ENCODE measurements at regions of chr13 and their contacts with region 1.

Region 1: GRCh38 chr13:49300739-49301589 is 53.2 kb downstream of the CDADC1 start:
- DNase-seq: peak; percentile 75
- H3K4me3 ChIP-seq: no peak overlapping the region
- H3K4me3 Mint-ChIP-seq: peak overlapping the region; percentile 57
- H3K27ac Mint-ChIP-seq: peak overlapping the region; percentile 69
- H3K4me1 ChIP-seq: peaks cover 28% of the 10 kb centered on the region
- H3K4me1 Mint-ChIP-seq: peaks cover 33% of the 10 kb centered on the region
- H3K27me3 ChIP-seq: no peaks in the 10 kb centered on the region
- H3K27me3 Mint-ChIP-seq: no peaks in the 10 kb centered on the region
- CTCF ChIP-seq: peak; percentile 86 to 91

Region 2: GRCh38 chr13:48356750-48357149 is 944.2 kb before region 1 on chr13:
- CTCF ChIA-PET with region 1: no interaction called
- POLR2A ChIA-PET with region 1: no interaction called
- intact Hi-C with region 1: no loop called
- DNase-seq: no peak
- H3K4me3 ChIP-seq: no peak overlapping the region
- H3K4me3 Mint-ChIP-seq: no peak overlapping the region
- H3K27ac Mint-ChIP-seq: no peak overlapping the region
- H3K4me1 ChIP-seq: no peaks in the 10 kb centered on the region
- H3K4me1 Mint-ChIP-seq: peaks cover 6% of the 10 kb centered on the region
- H3K27me3 ChIP-seq: no peaks in the 10 kb centered on the region
- H3K27me3 Mint-ChIP-seq: no peaks in the 10 kb centered on the region
- CTCF ChIP-seq: no peak

Region 3: DNA sequence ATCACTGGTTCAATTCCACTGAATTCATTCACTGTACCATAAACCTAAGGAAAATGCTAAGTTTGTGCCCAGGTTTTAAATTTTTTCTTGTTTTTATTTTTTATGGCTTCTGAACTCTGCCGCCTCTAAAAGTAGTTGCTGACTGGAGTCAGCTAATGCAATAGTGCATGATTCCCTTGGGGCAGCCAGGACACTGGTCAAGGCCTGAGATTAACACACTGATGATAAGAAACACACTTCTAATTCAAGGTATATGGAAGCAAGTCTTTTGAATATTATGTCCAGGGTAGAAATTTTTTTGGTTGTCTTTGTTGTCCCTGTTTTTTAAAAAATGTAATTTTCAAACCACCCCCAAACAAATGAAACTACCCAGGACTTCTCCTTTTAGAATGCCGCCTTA is 19.0 kb after region 1 on chr13:
- CTCF ChIA-PET with region 1: no interaction called
- POLR2A ChIA-PET with region 1: no interaction called
- intact Hi-C with region 1: no loop called
- DNase-seq: no peak
- H3K4me3 ChIP-seq: no peak overlapping the region
- H3K4me3 Mint-ChIP-seq: no peak overlapping the region
- H3K27ac Mint-ChIP-seq: no peak overlapping the region
- H3K4me1 ChIP-seq: peaks cover 6% of the 10 kb centered on the region
- H3K4me1 Mint-ChIP-seq: peaks cover 16% of the 10 kb centered on the region
- H3K27me3 ChIP-seq: no peaks in the 10 kb centered on the region
- H3K27me3 Mint-ChIP-seq: no peaks in the 10 kb centered on the region
- CTCF ChIP-seq: no peak

Region 4: GRCh38 chr13:49371943-49372613 is 71.1 kb after region 1 on chr13:
- CTCF ChIA-PET with region 1: interaction called, 4 read pairs
- POLR2A ChIA-PET with region 1: no interaction called
- intact Hi-C with region 1: loop called (anchors 2 kb)
- DNase-seq: peak; percentile 68 to 74
- H3K4me3 ChIP-seq: no peak overlapping the region
- H3K4me3 Mint-ChIP-seq: peak overlapping the region; percentile 1
- H3K27ac Mint-ChIP-seq: peak overlapping the region; percentile 71
- H3K4me1 ChIP-seq: peaks cover 83% of the 10 kb centered on the region
- H3K4me1 Mint-ChIP-seq: peaks cover 47% of the 10 kb centered on the region
- H3K27me3 ChIP-seq: no peaks in the 10 kb centered on the region
- H3K27me3 Mint-ChIP-seq: no peaks in the 10 kb centered on the region
- CTCF ChIP-seq: no peak

Region 5: GRCh38 chr13:49400755-49401659 is 100.0 kb after region 1 on chr13:
- CTCF ChIA-PET with region 1: no interaction called
- POLR2A ChIA-PET with region 1: no interaction called
- intact Hi-C with region 1: loop called (anchors 1 kb)
- DNase-seq: peak; percentile 67 to 74
- H3K4me3 ChIP-seq: peak overlapping the region; percentile 33
- H3K4me3 Mint-ChIP-seq: peak overlapping the region; percentile 72
- H3K27ac Mint-ChIP-seq: peak overlapping the region; percentile 58
- H3K4me1 ChIP-seq: peaks cover 30% of the 10 kb centered on the region
- H3K4me1 Mint-ChIP-seq: peaks cover 6% of the 10 kb centered on the region
- H3K27me3 ChIP-seq: no peaks in the 10 kb centered on the region
- H3K27me3 Mint-ChIP-seq: no peaks in the 10 kb centered on the region
- CTCF ChIP-seq: no peak

Region 6: DNA sequence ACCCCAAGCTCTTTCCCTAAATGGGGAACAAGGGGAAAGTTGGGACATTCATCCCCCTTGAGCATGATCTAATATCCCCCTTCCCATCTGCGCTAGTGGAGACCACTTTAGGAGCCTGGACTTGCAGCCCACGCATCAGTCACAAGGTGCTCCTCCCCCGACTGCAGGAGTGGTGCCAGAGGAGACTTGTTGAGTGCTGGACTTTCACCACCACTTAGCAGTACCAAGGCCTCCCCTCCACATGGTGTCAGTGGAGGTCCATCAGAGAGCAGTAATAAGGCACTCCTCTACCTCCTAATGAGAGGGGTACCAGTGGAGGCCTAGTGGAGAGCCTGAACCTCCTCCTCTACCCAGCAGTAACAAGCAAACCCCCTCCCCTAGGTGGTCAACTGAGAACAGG is 120.4 kb after region 1 on chr13:
- CTCF ChIA-PET with region 1: no interaction called
- POLR2A ChIA-PET with region 1: no interaction called
- intact Hi-C with region 1: loop called (anchors 5 kb)
- DNase-seq: peak; percentile 58 to 62
- H3K4me3 ChIP-seq: no peak overlapping the region
- H3K4me3 Mint-ChIP-seq: no peak overlapping the region
- H3K27ac Mint-ChIP-seq: no peak overlapping the region
- H3K4me1 ChIP-seq: no peaks in the 10 kb centered on the region
- H3K4me1 Mint-ChIP-seq: peaks cover 4% of the 10 kb centered on the region
- H3K27me3 ChIP-seq: no peaks in the 10 kb centered on the region
- H3K27me3 Mint-ChIP-seq: no peaks in the 10 kb centered on the region
- CTCF ChIP-seq: peak; percentile 20 to 26

Region 7: DNA sequence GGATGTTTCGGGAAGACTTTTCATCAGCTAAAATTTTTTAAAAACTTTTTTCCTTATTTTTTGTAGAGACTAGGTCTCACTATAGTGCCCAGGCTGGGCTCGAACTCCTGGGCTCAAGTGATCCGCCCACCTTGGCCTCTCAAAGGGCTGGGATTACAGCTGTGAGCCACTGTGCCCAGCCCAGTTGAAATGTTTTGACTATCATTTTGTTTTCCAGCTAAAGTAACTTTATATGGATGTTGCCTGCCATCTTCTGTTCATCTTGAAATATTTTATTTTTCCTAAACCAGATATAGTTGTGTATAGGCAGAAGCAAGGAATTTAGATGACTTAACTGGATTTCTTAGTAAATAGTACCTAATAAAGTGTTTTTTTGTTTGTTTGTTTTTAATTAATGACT is 135.9 kb after region 1 on chr13:
- CTCF ChIA-PET with region 1: interaction called, 4 read pairs
- POLR2A ChIA-PET with region 1: no interaction called
- intact Hi-C with region 1: loop called (anchors 1 kb)
- DNase-seq: peak in 1 of 2 experiments; percentile 28
- H3K4me3 ChIP-seq: no peak overlapping the region
- H3K4me3 Mint-ChIP-seq: no peak overlapping the region
- H3K27ac Mint-ChIP-seq: no peak overlapping the region
- H3K4me1 ChIP-seq: no peaks in the 10 kb centered on the region
- H3K4me1 Mint-ChIP-seq: no peaks in the 10 kb centered on the region
- H3K27me3 ChIP-seq: no peaks in the 10 kb centered on the region
- H3K27me3 Mint-ChIP-seq: no peaks in the 10 kb centered on the region
- CTCF ChIP-seq: no peak

Region 8: GRCh38 chr13:49517461-49517860 is 216.5 kb after region 1 on chr13:
- CTCF ChIA-PET with region 1: no interaction called
- POLR2A ChIA-PET with region 1: no interaction called
- intact Hi-C with region 1: loop called (anchors 1 kb)
- DNase-seq: peak in 1 of 2 experiments; percentile 40
- H3K4me3 ChIP-seq: no peak overlapping the region
- H3K4me3 Mint-ChIP-seq: no peak overlapping the region
- H3K27ac Mint-ChIP-seq: no peak overlapping the region
- H3K4me1 ChIP-seq: no peaks in the 10 kb centered on the region
- H3K4me1 Mint-ChIP-seq: no peaks in the 10 kb centered on the region
- H3K27me3 ChIP-seq: no peaks in the 10 kb centered on the region
- H3K27me3 Mint-ChIP-seq: no peaks in the 10 kb centered on the region
- CTCF ChIP-seq: peak; percentile 37 to 64

Region 9: DNA sequence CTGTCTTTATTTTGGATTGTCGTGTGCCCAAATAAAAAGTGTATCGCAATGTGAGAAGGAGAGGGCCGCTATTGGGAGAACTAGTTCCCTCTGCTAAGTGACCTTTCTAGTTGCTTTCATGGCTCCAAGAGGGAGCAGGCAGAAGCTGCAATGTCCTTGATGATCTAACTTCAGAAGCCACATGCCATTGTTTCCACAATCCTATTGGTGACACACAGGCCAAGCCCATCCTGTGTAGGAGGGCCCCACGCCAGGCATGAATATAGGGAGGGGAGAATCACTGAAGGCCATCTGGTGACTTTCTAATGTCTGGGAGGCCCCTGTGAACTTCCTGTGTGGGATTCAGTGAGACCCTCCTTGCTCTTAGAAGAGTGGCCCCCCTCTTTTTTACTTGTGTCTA is 539.3 kb after region 1 on chr13:
- CTCF ChIA-PET with region 1: no interaction called
- POLR2A ChIA-PET with region 1: no interaction called
- intact Hi-C with region 1: loop called (anchors 10 kb)
- DNase-seq: peak in 1 of 2 experiments; percentile 48
- H3K4me3 ChIP-seq: no peak overlapping the region
- H3K4me3 Mint-ChIP-seq: no peak overlapping the region
- H3K27ac Mint-ChIP-seq: peak overlapping the region; percentile 37
- H3K4me1 ChIP-seq: peaks cover 50% of the 10 kb centered on the region
- H3K4me1 Mint-ChIP-seq: peaks cover 43% of the 10 kb centered on the region
- H3K27me3 ChIP-seq: no peaks in the 10 kb centered on the region
- H3K27me3 Mint-ChIP-seq: no peaks in the 10 kb centered on the region
- CTCF ChIP-seq: no peak

Measured in Caco-2 (cell line).